Sigmoid colon (tissue), 7 donors: ENCODE measurements at regions of chr3 and their contacts with region 1.

Region 1: GRCh38 chr3:49171119-49171774 is at the start of gene KLHDC8B:
- DNase-seq: peak; percentile 96
- H3K4me3 ChIP-seq: peak within 1 kb of the TSS; percentile 58 to 93 (median 70)
- H3K27ac ChIP-seq: peak within 1 kb of the TSS; percentile 85 to 95 (median 88)
- H3K4me1 ChIP-seq: peaks cover 0 to 60% (median 48%) of the 10 kb centered on the region in 4 donors
- H3K27me3 ChIP-seq: no peaks in the 10 kb centered on the region
- CTCF ChIP-seq: peak; percentile 94 to 98 (median 96)
- EP300 ChIP-seq: peak in 1 of 4 donors; percentile 9
- POLR2A ChIP-seq: peak; percentile 31 to 76
- total RNA-seq, gene KLHDC8B: 95.3 to 134 (median 98.0) TPM

Region 2: DNA sequence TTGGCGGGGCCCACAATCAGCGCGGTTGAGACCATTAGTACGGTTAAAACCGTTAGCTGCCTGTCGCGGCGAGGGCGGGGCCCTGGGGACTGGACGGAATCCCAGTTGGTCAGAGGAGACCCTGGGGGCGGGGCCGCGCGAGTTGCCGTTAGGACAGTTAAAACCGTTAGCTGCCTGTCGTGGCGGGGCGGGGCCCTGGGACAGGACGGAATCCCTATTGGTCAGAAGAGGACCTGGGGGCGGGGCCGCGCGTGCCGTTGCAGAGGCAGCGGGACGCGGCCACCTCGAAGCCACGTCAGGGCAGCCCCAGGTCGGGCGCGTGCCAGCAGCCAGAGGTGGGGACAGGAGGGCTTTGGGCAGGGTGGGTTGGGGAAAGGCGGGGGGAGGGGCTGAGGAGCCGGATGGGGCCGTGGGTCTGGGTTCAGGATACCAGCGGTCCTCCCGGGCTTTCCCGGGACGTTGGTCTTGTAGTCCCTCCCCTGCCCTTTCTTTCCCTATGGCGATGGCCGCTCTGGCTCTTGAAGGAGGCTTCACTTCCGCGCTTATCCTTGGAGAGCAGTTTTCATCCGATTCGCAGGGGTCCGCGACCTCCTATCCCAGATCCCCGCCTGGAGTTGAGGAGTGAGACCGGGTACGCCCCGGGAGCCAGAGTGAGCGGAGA is 28.1 kb after region 1 on chr3:
- intact Hi-C with region 1: loop called (anchors 2 kb)
- DNase-seq: peak; percentile 98
- H3K4me3 ChIP-seq: peak overlapping the region; percentile 31 to 68 (median 42)
- H3K27ac ChIP-seq: peak overlapping the region; percentile 67 to 88 (median 71)
- H3K4me1 ChIP-seq: peaks cover 0 to 16% (median 10%) of the 10 kb centered on the region in 4 donors
- H3K27me3 ChIP-seq: no peaks in the 10 kb centered on the region
- CTCF ChIP-seq: no peak
- EP300 ChIP-seq: no peak
- POLR2A ChIP-seq: no peak

Region 3: DNA sequence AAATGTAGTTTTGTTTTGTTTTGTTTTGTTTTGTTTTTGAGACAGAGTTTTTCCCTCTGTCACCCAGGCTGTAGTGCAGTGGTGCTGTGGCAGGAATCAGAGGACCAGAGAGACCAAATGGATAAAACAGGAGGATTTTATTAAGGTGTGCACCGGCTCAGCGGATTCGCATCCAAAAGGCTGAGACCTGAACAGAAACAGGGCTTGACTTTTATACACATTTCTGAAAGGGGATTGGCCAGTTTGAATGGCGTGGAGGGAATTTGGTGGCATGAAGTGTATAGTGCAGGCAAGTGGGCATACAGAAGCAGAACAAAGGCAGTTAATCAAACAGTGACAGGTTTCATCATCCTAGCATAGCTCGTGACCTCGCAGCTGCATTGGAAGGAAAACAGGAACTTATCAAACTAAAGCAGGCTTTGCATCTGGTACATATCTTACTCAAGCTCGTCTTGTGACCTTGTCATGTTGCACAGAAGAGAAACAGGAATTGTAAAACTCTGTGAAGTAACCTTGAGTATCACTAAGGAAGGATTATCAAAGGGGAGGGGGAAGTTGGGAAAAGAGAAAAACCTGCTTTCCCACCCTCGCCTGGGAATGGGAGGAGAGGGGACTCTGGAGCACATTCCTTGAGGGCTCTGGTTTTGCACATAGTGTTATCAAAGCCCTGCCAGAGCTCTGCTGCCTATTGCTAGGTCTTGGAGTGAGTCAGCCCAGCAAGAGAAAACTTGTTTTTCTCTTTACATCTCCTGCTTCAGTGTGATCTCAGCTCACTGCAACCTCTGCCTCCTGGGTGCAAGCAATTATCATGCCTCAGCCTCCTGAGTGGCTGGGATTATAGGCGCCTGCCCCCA is 67.3 kb after region 1 on chr3:
- intact Hi-C with region 1: no loop called
- DNase-seq: peak; percentile 87
- H3K4me3 ChIP-seq: no peak overlapping the region
- H3K27ac ChIP-seq: peak overlapping the region; percentile 77 to 85 (median 82)
- H3K4me1 ChIP-seq: peaks cover 0 to 27% (median 22%) of the 10 kb centered on the region in 4 donors
- H3K27me3 ChIP-seq: no peaks in the 10 kb centered on the region
- CTCF ChIP-seq: no peak
- EP300 ChIP-seq: peak; percentile 62 to 95 (median 91)
- POLR2A ChIP-seq: no peak

Region 4: DNA sequence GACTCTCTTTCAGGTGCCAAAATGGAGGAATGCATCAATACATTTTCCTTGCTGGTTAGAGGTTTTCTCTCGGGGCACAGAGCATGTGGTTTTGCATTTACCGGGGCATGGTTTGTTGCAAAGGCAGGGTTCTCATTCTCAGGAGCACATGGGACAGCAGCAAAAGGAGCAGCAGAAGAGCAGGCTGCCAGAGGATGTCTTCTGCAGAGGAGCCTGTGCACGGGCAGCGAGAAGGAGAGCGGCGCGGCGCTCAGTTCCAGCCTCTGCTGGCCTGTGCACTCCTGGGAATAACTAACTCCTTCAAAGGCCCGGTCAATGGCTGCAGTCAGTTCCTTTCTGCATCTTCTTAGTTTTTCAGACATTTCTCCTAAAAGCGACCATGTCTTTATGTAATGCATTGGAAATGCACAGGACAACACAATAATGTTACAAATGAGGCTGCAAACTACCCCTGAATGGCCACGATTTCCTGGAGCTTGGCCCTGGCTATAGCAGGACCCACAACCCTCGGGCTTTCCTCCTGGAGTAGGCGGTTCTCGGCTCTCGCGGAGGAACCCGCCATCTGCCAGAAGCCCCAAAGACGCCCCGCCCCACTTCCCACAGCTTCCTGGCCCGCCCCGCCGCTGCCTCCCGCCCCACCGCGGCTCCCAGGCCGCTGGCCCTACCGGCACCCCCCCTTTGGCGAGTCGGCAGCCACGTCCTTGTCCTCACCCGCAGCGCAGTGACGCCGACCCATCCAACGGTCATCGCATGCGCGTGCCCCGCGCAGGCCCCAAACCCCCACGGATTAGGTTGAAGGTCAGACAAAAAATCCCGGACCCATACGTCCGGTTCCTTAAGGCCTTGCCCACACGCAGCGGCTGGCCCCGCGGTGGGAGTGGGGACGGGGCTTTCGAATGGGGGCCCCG is 105.5 kb after region 1 on chr3 and contains the start of gene C3orf62:
- intact Hi-C with region 1: loop called (anchors 1 kb)
- DNase-seq: peak; percentile 96
- H3K4me3 ChIP-seq: peak within 1 kb of the TSS; percentile 41 to 57 (median 51)
- H3K27ac ChIP-seq: peak within 1 kb of the TSS; percentile 86 to 96 (median 94)
- H3K4me1 ChIP-seq: peaks cover 0 to 25% (median 19%) of the 10 kb centered on the region in 4 donors
- H3K27me3 ChIP-seq: no peaks in the 10 kb centered on the region
- CTCF ChIP-seq: no peak
- EP300 ChIP-seq: no peak
- POLR2A ChIP-seq: peak; percentile 48 to 52
- total RNA-seq, gene C3orf62: 2.5 to 19.4 (median 4.5) TPM

Region 5: DNA sequence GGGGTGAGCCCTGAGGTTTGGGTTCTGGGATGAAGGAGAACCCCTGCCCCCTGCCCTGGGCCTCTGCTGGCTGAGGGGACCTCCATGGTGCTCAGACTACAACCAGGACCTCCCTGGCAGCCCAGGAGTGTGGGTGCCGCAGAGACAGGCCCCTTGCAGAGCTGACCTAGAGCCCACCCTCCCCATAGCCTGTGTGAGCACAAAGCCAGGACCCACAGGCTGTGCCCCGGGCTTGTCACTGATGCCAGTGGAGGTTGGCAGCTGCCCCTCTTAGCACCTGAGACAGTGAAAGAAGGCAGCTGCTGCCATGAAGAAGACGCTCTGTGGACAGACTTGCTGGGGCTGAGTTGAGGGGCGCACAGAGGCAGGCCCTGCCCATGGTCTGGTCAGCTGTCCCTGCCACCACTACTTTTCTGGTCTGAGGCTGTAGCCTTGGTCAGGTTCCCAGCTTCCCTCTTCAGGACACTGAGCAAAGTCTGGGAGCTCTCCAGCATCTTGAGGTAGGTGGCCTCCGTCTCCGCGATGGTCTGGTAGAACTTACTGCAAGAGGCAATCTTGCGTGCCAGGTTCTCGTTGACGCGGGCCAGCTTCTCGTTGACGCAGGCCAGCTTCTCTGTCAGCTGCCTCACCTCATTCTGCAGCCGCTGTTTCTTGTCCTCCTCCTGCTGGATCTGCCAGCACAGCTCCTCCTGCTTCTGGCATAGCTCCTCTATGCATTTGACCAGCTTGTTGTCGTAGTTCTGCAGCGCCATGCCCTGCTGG is 145.6 kb after region 1 on chr3:
- intact Hi-C with region 1: no loop called
- DNase-seq: peak; percentile 96
- H3K4me3 ChIP-seq: no peak overlapping the region
- H3K27ac ChIP-seq: peak overlapping the region in 3 of 4 donors; percentile 64 to 83 (median 81)
- H3K4me1 ChIP-seq: peaks cover 0 to 8% (median 3%) of the 10 kb centered on the region in 4 donors
- H3K27me3 ChIP-seq: no peaks in the 10 kb centered on the region
- CTCF ChIP-seq: no peak
- EP300 ChIP-seq: peak; percentile 53 to 91 (median 84)
- POLR2A ChIP-seq: no peak

Region 6: DNA sequence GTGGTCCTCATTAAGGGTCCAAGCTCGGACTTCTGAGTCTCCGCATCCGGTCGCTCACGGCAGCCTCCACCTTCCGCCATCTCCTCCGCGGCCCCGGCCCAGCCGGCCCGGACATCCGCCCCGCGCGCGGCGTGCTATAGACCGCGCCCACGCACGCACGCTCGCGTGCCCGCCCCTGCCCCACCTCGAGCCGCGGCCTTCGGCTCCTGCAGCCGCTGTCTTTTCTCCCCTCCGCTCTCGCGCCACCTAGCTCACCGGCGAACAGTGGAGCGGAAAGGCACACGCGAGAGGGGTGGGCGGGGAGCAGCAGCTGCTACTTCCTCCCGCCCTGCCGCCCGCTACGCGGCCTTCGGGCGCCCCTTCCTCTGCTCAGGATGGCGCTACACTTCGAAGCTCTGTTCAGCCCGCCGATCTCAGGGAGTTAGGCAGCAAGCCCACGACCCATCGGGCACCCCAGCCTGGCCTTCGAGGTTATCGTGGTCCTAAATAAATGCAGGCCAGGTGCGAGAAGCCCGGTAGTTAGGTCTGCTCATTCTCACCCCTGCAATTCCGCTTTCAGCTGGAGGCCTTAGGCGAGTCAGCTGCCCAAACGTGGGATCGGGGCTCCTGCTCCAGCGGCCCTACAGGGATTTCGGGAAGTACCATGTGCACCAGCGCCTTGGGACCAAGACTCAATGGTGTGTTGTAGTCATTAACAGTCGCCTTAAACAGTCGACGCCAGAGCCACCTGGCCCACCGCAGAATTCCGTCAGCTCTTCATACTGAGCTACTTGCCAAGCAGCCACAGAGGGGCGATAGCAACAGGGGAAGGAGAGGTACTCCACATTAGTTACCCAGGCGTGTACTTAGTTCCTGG is 168.9 kb after region 1 on chr3 and contains the start of gene USP4:
- intact Hi-C with region 1: loop called (anchors 1 kb)
- DNase-seq: peak; percentile 94
- H3K4me3 ChIP-seq: peak within 1 kb of the TSS; percentile 63 to 89 (median 68)
- H3K27ac ChIP-seq: peak within 1 kb of the TSS; percentile 88 to 95 (median 93)
- H3K4me1 ChIP-seq: peaks cover 0 to 26% (median 21%) of the 10 kb centered on the region in 4 donors
- H3K27me3 ChIP-seq: no peaks in the 10 kb centered on the region
- CTCF ChIP-seq: peak; percentile 6 to 15 (median 13)
- EP300 ChIP-seq: peak in 1 of 4 donors; percentile 2
- POLR2A ChIP-seq: peak in 1 of 2 donors; percentile 45
- total RNA-seq, gene USP4: 16.3 to 28.2 (median 20.5) TPM

Region 7: DNA sequence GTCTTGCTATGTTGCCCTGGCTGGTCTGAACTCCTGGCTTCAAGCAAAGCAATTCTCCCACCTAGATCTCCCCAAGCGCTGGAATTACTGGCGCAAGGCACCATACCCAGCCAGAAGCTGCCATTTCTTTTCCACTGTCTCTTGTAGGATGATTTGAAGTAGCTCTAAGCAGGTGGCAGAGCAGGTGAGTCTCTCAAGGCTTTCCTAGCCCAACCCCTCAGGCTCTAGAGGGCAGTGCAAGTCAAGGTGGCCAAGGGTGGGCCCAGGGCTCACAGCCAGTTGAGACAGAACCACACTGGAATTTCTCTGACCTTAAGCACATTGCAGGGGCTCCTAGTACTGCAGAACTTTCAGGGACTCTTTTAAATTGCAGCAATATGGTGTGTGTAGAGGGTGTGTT is 283.2 kb after region 1 on chr3:
- intact Hi-C with region 1: loop called (anchors 2 kb)
- DNase-seq: no peak
- H3K4me3 ChIP-seq: no peak overlapping the region
- H3K27ac ChIP-seq: no peak overlapping the region
- H3K4me1 ChIP-seq: peaks cover 0 to 7% (median 0%) of the 10 kb centered on the region in 4 donors
- H3K27me3 ChIP-seq: no peaks in the 10 kb centered on the region
- CTCF ChIP-seq: no peak
- EP300 ChIP-seq: no peak
- POLR2A ChIP-seq: no peak